ENCODE measurements at regions of chr7 and their contacts with region 1.

Region 1: GRCh38 chr7:135662373-135663114 is at the start of gene STMP1:
- DNase-seq: peak; percentile 95 to 98
- H3K4me3 ChIP-seq: peak within 1 kb of the TSS; percentile 75 to 91
- H3K27ac ChIP-seq: peak within 1 kb of the TSS; percentile 90
- H3K4me1 ChIP-seq: peaks cover 0 to 45% (median 17%) of the 10 kb centered on the region in 4 donors
- H3K27me3 ChIP-seq: no peaks in the 10 kb centered on the region
- CTCF ChIP-seq: peak in 1 of 2 experiments; percentile 89

Region 2: DNA sequence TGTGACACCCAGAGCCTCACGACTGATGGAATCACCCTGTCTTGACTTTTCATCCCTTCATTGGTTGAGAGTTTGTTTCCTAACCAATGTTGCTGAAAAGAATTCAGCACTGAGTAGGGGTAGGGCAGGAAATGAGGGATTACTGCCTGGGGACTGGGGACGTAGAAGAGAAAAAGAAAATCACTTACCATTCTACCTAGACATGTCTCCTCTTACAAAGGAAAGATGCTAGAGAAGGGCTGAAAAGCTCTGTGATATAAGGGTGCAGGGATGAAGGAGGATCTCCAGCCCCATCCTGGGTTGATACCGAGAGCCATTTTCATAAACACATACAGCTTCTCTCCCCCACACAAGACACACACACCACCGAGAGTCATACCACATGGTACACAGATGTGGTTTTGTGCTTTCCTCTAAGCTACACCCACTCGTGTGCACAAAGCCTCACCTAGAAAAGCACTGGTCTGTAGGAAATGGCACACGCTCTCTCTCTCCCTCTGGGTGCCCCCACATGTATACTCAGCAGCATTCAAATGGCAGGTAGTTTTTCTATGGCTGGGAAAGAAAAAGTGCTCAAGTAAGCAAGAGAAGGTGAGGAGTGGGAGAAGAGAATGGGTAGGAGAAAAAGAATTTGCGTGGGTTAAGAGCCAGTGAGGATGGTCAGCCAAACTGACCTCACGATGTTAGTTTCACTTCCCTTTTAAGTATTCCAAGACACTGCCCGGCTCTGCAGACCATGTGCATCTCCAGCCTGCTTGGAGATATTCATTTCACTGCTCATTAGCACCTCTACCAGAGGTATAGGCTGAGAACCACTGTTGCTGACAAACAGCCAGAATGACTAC is 797.3 kb before region 1 on chr7:
- intact Hi-C with region 1: no loop called
- DNase-seq: no peak
- H3K4me3 ChIP-seq: peak overlapping the region; percentile 22 to 34
- H3K27ac ChIP-seq: peak overlapping the region; percentile 66 to 73
- H3K4me1 ChIP-seq: peaks cover 0 to 98% (median 45%) of the 10 kb centered on the region in 4 donors
- H3K27me3 ChIP-seq: no peaks in the 10 kb centered on the region
- CTCF ChIP-seq: no peak

Region 3: DNA sequence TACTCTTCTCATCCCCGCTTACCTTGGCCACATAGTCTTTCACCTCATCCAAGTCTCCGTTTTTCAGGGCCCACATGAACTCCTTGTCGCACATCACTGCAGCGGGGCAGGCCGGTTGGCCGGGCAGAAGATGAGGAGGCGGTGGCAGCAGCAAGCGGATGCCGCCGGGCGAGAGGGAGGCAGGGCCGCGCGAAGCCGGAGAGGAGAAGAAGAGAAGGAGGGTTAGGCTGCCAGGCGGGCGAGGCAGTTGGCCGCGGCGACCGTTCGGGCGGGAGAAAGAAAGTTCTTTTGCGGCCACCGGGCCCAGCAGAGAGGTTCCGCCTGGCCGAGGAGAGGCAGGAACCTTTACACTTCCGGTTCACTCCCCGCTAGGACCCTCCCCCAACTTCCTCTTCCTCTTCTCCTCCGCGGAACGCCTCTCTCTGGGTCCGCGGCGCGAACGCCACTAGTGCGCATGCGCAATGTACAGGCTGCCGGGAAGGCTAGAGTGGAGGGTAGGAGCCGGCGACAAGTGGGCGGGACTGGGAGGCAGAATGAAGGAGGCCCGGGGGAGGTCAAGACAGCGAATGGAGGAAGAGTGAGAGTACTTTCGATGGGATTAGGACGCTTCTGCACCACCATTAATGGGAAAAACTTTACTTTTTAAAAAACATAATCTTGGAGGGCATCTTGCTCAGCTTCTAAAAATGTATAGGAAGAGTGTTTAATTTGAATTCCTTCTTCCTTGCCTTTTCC is 314.6 kb after region 1 on chr7 and contains the start of gene MTPN:
- intact Hi-C with region 1: loop called (anchors 5 kb)
- DNase-seq: peak; percentile 99
- H3K4me3 ChIP-seq: peak within 1 kb of the TSS; percentile 85 to 87
- H3K27ac ChIP-seq: peak within 1 kb of the TSS; percentile 83 to 85
- H3K4me1 ChIP-seq: peaks cover 0 to 41% (median 31%) of the 10 kb centered on the region in 4 donors
- H3K27me3 ChIP-seq: no peaks in the 10 kb centered on the region
- CTCF ChIP-seq: no peak

Region 4: DNA sequence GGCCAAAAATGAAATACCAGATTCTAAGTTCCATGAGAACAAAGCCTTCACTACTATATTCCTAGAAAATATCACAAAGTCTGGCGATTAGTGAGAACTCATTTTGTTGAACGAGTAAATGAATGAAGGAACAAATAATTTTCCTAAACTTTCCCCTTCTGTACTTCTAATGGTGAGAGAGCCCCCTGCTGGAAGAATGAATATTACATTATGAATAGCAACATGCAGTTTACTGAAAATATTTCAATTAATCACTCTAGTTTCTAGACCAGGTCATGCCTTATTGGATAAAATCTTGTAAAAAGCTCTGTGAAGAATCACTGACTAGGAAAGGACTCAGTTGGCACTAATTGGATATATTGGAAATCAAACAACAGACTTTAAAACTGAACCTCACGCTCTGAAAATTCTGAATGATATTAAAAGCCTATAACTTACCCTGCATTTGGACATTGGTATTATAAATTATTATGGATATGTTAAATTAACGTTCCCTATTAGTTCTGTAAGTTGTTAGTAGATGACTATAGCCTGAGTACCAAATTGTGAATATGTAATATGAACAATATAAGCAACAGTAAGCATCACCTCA is 347.0 kb after region 1 on chr7:
- intact Hi-C with region 1: loop called (anchors 5 kb)
- DNase-seq: no peak
- H3K4me3 ChIP-seq: no peak overlapping the region
- H3K27ac ChIP-seq: no peak overlapping the region
- H3K4me1 ChIP-seq: no peaks in the 10 kb centered on the region
- H3K27me3 ChIP-seq: no peaks in the 10 kb centered on the region
- CTCF ChIP-seq: peak; percentile 67 to 82

Measured in tibial artery (tissue), 4 donors.